Activated CD8-positive, alpha-beta memory T cell treated with anti-CD3 and anti-CD28 coated beads, Interleukin-2, amount 10 ng/mL, durations not matched to agents 7 days and 5 days (primary cell): ENCODE measurements at regions of chr17 and their contacts with region 1.

Region 1: GRCh38 chr17:29148790-29149430 is 31.3 kb downstream of the MYO18A start:
- DNase-seq: peak; percentile 96
- ATAC-seq: peak; percentile 95
- H3K4me3 Mint-ChIP-seq: peak overlapping the region; percentile 69
- H3K27ac Mint-ChIP-seq: peak overlapping the region; percentile 82
- H3K4me1 Mint-ChIP-seq: peaks cover 55% of the 10 kb centered on the region
- H3K27me3 Mint-ChIP-seq: no peaks in the 10 kb centered on the region

Region 2: GRCh38 chr17:29124117-29124924 is 24.6 kb before region 1 on chr17:
- CTCF ChIA-PET with region 1: interaction called, 557 read pairs
- DNase-seq: peak; percentile 66
- ATAC-seq: peak; percentile 91
- H3K4me3 Mint-ChIP-seq: no peak overlapping the region
- H3K27ac Mint-ChIP-seq: no peak overlapping the region
- H3K4me1 Mint-ChIP-seq: peaks cover 2% of the 10 kb centered on the region
- H3K27me3 Mint-ChIP-seq: no peaks in the 10 kb centered on the region

Region 3: GRCh38 chr17:29180034-29180787 is 31.3 kb after region 1 on chr17 and contains the start of gene MYO18A:
- CTCF ChIA-PET with region 1: interaction called, 541 read pairs
- DNase-seq: peak; percentile 84
- ATAC-seq: peak; percentile 94
- H3K4me3 Mint-ChIP-seq: peak within 1 kb of the TSS; percentile 33
- H3K27ac Mint-ChIP-seq: no peak within 1 kb of the TSS
- H3K4me1 Mint-ChIP-seq: peaks cover 34% of the 10 kb centered on the region
- H3K27me3 Mint-ChIP-seq: peaks cover 6% of the 10 kb centered on the region
- total RNA-seq, gene MYO18A: 67.7 to 85.8 TPM

Region 4: GRCh38 chr17:29195465-29196081 is 46.7 kb after region 1 on chr17:
- CTCF ChIA-PET with region 1: interaction called, 10 read pairs
- DNase-seq: no peak
- ATAC-seq: no peak
- H3K4me3 Mint-ChIP-seq: no peak overlapping the region
- H3K27ac Mint-ChIP-seq: no peak overlapping the region
- H3K4me1 Mint-ChIP-seq: peaks cover 3% of the 10 kb centered on the region
- H3K27me3 Mint-ChIP-seq: peaks cover 22% of the 10 kb centered on the region

Region 5: GRCh38 chr17:29256735-29257466 is 108.0 kb after region 1 on chr17:
- CTCF ChIA-PET with region 1: interaction called, 11 read pairs
- DNase-seq: no peak
- ATAC-seq: no peak
- H3K4me3 Mint-ChIP-seq: no peak overlapping the region
- H3K27ac Mint-ChIP-seq: peak overlapping the region; percentile 30
- H3K4me1 Mint-ChIP-seq: peaks cover 13% of the 10 kb centered on the region
- H3K27me3 Mint-ChIP-seq: no peaks in the 10 kb centered on the region